Gastrocnemius medialis (tissue), 4 donors: ENCODE measurements at regions of chr9 and their contacts with region 1.

Region 1: DNA sequence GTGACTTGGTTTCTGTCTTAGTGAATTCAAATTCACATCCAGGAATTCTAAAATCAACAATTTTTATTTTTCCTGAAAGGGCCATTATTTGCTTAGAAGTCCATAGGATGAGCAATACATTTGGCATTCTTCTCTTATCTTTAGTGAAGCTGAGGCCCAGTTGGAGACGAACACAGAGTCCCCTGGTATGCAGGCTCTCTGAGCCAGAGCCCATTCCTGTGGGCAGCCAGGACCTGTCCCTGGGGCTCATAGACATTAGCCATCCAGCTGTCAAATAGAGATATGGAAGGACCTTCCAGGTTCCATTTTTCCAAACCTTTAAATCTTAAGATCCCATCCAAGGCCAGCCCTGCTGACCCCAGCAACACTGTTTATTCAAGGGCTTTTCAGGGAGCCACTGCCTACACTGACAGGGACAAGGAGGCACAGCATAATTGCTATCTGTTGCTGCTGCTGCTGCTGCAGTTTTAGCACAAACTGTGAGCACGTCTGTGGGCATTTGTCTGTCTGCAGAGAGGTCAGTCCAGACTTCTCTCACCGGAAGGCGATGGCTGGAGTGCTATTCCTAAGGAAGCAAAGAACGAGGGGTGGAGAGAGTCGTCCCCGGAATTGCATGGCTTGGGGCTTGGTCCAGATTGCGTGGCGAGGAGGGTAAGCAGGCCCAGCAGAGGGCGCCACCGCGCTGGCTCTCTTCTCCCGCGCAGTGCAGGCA is 639.0 kb downstream of the CCDC171 start:
- DNase-seq: peak; percentile 28 to 55
- ATAC-seq: peak; percentile 66 to 68
- H3K4me3 ChIP-seq: no peak overlapping the region
- H3K27ac ChIP-seq: no peak overlapping the region
- H3K4me1 ChIP-seq: peaks cover 3% of the 10 kb centered on the region in 2 donors
- H3K27me3 ChIP-seq: no peaks in the 10 kb centered on the region
- CTCF ChIP-seq: peak; percentile 16 to 78 (median 70)
- POLR2A ChIP-seq: no peak

Region 2: DNA sequence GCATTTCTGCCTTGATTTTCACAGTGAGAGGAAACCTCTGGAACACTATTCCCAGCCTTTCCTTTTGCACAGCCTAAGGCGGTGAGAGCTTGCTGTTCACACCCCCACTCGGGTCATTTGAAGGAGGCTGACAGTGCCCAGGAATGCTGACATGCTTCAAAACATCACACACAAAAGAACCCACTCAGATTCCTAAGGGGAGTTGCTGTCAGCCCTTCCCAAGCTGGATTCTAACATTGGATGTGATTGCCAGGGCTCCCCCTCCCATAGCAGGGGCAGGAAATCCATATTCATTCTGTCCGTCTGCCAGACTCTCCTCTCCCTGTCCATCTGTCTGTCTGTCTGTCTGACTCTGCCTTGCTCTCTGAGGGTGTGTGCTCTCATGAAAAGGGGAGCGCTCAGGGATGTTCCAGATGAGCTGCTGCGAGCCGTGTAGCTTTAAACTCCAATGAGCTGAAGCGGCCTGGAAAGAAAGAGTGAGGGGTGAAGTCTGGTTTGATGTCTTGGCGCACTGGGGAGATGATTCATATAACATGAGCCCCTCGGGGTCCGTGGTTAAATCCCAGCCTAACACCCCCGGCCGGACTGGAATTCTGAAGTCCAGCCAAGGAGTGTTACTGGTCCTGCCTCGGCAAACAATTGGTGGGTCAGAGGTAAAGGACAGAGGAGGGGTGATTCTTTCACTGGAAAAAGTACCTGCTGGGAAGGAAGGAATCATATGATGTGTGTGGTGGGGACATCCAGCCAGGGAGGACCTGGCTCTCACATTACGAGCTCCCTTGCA is 122.0 kb before region 1 on chr9:
- in situ Hi-C with region 1: no loop called
- intact Hi-C with region 1: no loop called
- DNase-seq: no peak
- ATAC-seq: no peak
- H3K4me3 ChIP-seq: no peak overlapping the region
- H3K27ac ChIP-seq: no peak overlapping the region
- H3K4me1 ChIP-seq: no peaks in the 10 kb centered on the region
- H3K27me3 ChIP-seq: no peaks in the 10 kb centered on the region
- CTCF ChIP-seq: no peak
- POLR2A ChIP-seq: no peak

Region 3: DNA sequence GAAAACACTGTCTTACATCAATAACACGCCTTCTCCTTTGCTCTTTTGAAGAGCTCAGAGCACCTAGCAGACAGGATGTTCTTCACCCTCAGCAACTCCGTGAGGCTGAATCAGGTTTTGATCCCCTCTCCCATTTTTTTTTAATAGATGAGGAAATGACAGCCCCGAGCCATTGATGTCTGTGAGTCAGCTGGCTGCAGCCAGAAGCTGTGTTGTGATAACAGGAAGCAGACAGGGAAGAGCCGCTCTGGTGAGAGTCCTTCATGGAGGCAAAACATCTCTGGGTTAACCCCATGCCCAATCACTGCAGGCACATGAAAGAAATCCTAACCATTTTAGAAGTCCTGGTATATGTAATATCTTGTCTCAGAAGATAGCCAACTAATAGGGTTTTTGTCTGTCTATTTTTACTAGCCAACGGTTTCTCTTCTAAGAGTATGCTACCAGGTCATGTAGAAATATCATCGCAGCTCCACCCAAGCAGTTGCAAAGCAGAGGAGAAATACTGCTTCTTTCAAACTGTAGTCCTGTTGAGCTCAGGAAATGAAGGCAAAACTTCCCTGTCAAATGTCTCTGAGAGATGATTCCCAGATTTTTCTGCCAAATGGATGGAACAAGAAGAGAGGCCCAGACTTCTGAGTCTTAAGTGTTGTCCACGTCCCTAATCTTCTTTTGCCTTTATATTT is 70.1 kb before region 1 on chr9:
- in situ Hi-C with region 1: no loop called
- intact Hi-C with region 1: no loop called
- DNase-seq: no peak
- ATAC-seq: no peak
- H3K4me3 ChIP-seq: no peak overlapping the region
- H3K27ac ChIP-seq: no peak overlapping the region
- H3K4me1 ChIP-seq: no peaks in the 10 kb centered on the region
- H3K27me3 ChIP-seq: no peaks in the 10 kb centered on the region
- CTCF ChIP-seq: no peak
- POLR2A ChIP-seq: no peak

Region 4: DNA sequence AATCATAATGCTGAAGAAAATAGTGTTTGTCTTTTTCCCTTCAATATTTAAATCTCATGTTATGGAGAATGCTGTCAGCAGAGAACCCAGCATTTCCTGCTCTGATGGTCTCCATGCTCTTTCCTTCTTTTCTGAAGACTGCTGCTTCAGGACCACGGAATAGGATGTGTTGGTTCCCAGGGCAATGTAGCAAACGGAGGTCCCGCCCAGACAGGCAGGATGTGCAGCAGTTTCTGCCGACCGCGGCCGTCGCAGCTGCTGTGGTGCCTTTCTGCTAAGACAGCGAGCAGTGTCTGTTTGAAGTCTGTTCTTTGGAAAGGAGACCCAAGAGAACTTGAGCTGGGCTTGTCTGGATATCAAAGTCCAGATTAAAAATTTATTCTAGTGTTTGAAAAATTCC is 15.3 kb after region 1 on chr9:
- in situ Hi-C with region 1: no loop called
- intact Hi-C with region 1: no loop called
- DNase-seq: peak in 1 of 2 donors; percentile 25
- ATAC-seq: peak in 1 of 2 donors; percentile 41
- H3K4me3 ChIP-seq: no peak overlapping the region
- H3K27ac ChIP-seq: no peak overlapping the region
- H3K4me1 ChIP-seq: peaks cover 0 to 2% of the 10 kb centered on the region in 2 donors
- H3K27me3 ChIP-seq: no peaks in the 10 kb centered on the region
- CTCF ChIP-seq: no peak
- POLR2A ChIP-seq: no peak

Region 5: GRCh38 chr9:16530669-16531642 is 339.1 kb after region 1 on chr9:
- in situ Hi-C with region 1: loop called in 1 of 4 experiments (anchors 25 kb)
- intact Hi-C with region 1: no loop called
- DNase-seq: peak; percentile 55 to 73
- ATAC-seq: peak; percentile 82 to 90
- H3K4me3 ChIP-seq: no peak overlapping the region
- H3K27ac ChIP-seq: peak overlapping the region; percentile 55 to 69 (median 61)
- H3K4me1 ChIP-seq: peaks cover 0 to 26% of the 10 kb centered on the region in 2 donors
- H3K27me3 ChIP-seq: no peaks in the 10 kb centered on the region
- CTCF ChIP-seq: no peak
- POLR2A ChIP-seq: no peak

Region 6: GRCh38 chr9:16828340-16829281 is 636.8 kb after region 1 on chr9:
- in situ Hi-C with region 1: no loop called
- intact Hi-C with region 1: loop called (anchors 10 kb)
- DNase-seq: peak; percentile 4 to 28
- ATAC-seq: peak; percentile 19 to 64
- H3K4me3 ChIP-seq: peak overlapping the region; percentile 45 to 58 (median 48)
- H3K27ac ChIP-seq: peak overlapping the region; percentile 59 to 75 (median 70)
- H3K4me1 ChIP-seq: peaks cover 13 to 17% of the 10 kb centered on the region in 2 donors
- H3K27me3 ChIP-seq: no peaks in the 10 kb centered on the region
- CTCF ChIP-seq: no peak
- POLR2A ChIP-seq: no peak